Right cardiac atrium (tissue), 5 donors: ENCODE measurements at regions of chr11 and their contacts with region 1.

Region 1: DNA sequence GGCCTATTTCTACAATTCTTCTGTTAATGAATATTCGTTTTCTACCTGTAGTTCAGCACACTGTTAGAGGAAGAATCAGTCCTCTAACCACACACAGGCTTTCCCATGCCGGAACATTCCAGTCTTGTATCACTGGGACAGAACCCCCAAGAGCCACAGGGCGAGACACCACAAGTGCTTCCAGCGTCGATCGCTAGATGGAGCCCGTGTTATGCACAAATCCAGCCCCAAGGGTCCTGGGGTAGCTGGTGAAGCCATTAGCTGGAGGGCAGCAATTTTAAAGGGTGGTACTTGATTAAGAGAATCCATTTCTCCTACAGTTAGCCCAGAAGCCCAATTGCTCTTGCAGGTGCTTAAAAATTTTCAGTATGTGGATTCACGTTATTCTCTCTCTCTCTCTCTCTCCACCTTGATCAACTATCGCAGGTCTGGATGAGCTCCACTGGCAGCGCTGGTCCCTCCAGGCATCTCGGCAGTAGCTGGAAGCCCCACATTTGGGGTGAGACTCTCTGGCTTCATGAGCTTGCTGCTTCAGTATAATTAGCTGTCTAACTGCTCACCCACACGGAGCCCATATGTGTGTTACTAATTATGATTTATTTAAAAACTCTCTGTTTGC is 148.2 kb upstream of the SNX19 start:
- DNase-seq: peak; percentile 35 to 72 (median 67)
- ATAC-seq: peak; percentile 42 to 50
- H3K4me3 ChIP-seq: no peak overlapping the region
- H3K27ac ChIP-seq: no peak overlapping the region
- H3K4me1 ChIP-seq: no peaks in the 10 kb centered on the region
- H3K27me3 ChIP-seq: no peaks in the 10 kb centered on the region

Region 2: GRCh38 chr11:130545449-130546072 is 518.9 kb before region 1 on chr11:
- intact Hi-C with region 1: no loop called
- DNase-seq: no peak
- ATAC-seq: peak; percentile 35 to 48
- H3K4me3 ChIP-seq: no peak overlapping the region
- H3K27ac ChIP-seq: no peak overlapping the region
- H3K4me1 ChIP-seq: peaks cover 3% of the 10 kb centered on the region
- H3K27me3 ChIP-seq: no peaks in the 10 kb centered on the region

Region 3: GRCh38 chr11:131194726-131195125 is 130.2 kb after region 1 on chr11:
- intact Hi-C with region 1: no loop called
- DNase-seq: no peak
- ATAC-seq: no peak
- H3K4me3 ChIP-seq: no peak overlapping the region
- H3K27ac ChIP-seq: no peak overlapping the region
- H3K4me1 ChIP-seq: peaks cover 2% of the 10 kb centered on the region
- H3K27me3 ChIP-seq: no peaks in the 10 kb centered on the region

Region 4: DNA sequence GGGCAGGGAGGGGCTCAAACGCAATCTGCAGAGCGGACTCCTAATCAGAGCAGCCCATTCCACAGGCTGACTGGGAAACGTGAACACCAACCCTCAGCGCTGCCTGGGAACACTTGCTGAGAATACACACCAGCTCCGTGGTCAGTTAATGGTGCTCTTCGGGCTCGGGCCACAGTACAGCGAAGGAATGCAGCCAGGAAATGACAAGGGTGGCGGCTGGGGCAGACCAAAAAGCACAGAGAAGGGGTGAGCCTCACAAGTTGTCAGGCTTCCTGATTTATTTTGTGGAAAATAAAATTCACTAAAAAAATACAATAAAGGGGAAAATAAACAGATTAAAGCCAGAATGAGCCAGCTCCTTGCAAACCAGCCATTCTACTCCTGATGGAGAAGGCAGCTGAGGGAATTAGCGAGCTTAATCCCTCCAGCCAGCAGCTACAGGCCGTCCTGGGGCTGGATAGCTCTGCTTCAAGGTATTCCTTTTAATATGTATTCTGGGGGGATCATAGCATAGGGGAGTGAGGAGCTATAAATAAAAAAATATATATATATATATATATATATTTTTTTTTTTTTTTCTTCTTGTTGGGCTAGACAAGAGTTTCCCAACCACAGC is 140.4 kb after region 1 on chr11:
- intact Hi-C with region 1: loop called in 1 of 4 experiments (anchors 10 kb)
- DNase-seq: no peak
- ATAC-seq: no peak
- H3K4me3 ChIP-seq: no peak overlapping the region
- H3K27ac ChIP-seq: no peak overlapping the region
- H3K4me1 ChIP-seq: no peaks in the 10 kb centered on the region
- H3K27me3 ChIP-seq: no peaks in the 10 kb centered on the region

Region 5: DNA sequence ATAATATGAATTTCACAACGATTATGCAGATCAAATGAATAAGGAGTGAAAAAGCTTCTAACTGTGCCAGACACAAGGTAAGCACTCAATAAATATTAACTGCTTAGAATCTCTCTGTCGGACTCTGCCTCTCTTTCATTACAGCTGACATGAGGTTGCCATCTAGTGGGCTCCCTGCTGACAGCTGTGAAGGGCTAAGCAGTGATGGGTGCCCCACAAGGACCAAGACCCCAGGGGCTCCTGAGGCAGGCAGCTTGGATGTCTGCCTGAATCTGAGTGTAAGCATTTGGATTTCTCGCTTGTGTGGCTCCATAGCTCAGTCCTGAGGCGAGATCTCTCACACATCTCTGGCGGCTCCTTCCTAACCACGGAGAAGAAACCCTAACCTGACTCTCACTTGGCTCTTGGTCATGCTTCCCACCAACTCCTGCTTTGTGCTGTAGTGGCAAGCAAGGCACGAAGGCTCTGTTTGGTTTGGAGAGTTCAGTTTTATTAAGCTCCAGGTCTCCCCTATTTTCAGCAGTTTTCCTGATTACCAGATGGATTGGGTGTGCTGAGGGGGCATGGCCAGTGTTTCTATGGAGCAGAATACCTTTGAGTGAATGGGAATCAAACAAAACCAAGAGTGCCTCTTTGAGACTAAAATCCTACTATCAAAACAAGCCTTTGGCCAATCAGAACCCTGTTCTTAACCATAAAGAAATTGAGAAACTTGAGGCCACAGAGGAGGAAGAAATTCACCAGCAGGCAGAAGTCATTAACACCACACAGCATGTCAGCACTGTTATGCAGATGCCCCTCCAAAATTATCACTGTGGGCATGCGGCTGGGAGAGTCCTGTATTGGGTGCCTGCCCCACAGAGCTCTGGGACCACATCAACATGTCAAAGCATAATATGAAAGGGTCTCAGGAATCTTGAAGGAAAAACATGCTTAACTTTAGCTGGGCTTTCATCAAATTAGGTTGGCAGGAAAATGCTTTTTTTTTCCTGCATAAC is 153.1 kb after region 1 on chr11:
- intact Hi-C with region 1: loop called in 1 of 4 experiments (anchors 5 kb)
- DNase-seq: no peak
- ATAC-seq: no peak
- H3K4me3 ChIP-seq: no peak overlapping the region
- H3K27ac ChIP-seq: no peak overlapping the region
- H3K4me1 ChIP-seq: no peaks in the 10 kb centered on the region
- H3K27me3 ChIP-seq: no peaks in the 10 kb centered on the region

Region 6: DNA sequence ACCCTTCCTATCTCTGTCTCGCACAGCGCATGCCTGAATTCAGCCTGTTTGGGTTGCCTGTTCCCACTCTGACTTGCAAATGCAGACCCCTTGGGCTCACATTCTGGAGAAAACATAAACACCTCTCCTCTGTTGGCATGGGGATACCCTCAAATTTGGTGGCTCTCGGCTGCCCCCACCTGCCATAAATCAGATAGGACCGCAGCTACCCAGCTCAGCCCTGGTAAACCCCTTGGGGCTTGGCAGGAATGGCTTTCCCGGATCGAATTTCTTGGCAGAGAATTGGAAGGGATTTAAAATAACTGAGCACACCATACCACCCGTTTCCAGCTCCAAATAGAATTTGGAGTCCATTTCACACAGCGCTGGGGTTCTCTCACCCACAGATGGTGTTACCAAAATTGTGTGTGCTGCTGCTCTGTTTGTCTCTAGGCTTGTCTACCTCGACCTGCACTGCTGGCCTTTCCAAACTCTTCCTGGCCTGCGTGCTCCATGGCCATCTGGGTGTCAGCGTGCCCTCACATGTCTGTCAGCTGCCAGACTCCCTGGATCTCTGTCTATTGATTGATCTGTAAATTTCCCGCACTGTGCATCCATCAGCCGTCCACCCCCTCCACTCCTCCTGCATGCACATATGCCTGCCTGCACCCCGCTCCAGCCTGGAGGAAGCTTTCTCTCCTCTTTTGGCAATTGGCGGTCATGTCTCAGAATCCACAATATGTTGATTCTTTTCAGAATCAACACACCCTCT is 439.9 kb after region 1 on chr11:
- intact Hi-C with region 1: loop called in 1 of 4 experiments (anchors 10 kb)
- DNase-seq: no peak
- ATAC-seq: peak; percentile 60 to 66
- H3K4me3 ChIP-seq: no peak overlapping the region
- H3K27ac ChIP-seq: no peak overlapping the region
- H3K4me1 ChIP-seq: no peaks in the 10 kb centered on the region
- H3K27me3 ChIP-seq: no peaks in the 10 kb centered on the region

Region 7: DNA sequence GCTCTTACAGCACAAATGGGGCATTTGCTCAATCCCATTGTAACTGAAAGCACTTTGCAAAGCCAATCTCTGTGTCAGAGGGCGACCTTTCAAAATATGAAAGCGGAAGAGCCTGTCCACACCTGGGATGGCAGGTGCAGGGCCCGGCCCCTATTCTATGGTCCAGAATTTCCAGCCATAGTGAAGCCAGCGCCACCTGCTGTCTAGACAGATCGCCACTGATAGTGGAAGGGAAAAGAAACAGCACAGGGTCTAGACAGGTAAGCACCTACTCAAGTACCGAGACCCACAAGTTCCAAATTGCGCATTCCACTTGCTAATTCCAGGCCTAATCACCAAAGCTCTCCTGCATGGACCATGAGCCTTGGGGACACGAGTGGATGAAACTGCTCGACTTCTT is 447.3 kb after region 1 on chr11:
- intact Hi-C with region 1: loop called in 3 of 4 experiments (anchors 5 to 10 kb)
- DNase-seq: peak in 1 of 3 donors; percentile 62
- ATAC-seq: peak in 1 of 2 donors; percentile 45
- H3K4me3 ChIP-seq: no peak overlapping the region
- H3K27ac ChIP-seq: no peak overlapping the region
- H3K4me1 ChIP-seq: no peaks in the 10 kb centered on the region
- H3K27me3 ChIP-seq: no peaks in the 10 kb centered on the region

Region 8: GRCh38 chr11:131674051-131674755 is 609.7 kb after region 1 on chr11:
- intact Hi-C with region 1: loop called in 3 of 4 experiments (anchors 5 to 10 kb)
- DNase-seq: peak; percentile 59 to 87 (median 86)
- ATAC-seq: peak; percentile 86 to 88
- H3K4me3 ChIP-seq: no peak overlapping the region
- H3K27ac ChIP-seq: no peak overlapping the region
- H3K4me1 ChIP-seq: no peaks in the 10 kb centered on the region
- H3K27me3 ChIP-seq: no peaks in the 10 kb centered on the region